Activated CD4-positive, alpha-beta memory T cell treated with anti-CD3 and anti-CD28 coated beads for 36 hours (primary cell): ENCODE measurements at regions of chr16 and their contacts with region 1.

Region 1: DNA sequence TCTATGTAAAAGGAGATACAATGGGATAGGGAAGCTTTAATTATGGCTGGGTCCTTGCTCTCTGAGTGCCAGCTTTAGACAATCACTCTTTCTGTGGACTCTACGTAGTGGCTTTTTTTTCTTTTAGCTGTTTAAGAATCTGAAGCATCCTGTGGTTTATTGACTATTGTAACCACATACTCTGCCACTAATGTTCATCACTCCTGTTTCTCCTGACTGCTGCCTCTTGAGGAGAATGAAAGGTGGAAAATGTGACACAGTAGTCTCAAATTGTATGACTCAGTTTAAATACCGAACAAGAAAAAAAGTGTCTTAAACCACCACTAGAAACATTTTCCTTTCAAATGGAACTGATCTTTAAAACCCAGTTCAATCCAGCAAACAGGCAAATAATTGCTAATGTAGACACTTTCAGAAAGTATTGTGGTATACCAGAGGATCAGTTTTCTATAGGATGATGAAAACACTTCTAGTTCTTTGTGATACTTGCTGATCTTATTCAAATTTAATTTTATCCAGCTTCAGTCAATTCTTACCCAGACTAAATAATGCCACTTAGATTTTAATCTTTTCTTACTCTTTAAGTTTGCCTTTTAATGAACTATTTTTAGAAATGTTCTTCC is 302.7 kb upstream of the PMFBP1 start:
- DNase-seq: no peak
- H3K4me3 Mint-ChIP-seq: no peak overlapping the region
- H3K27ac Mint-ChIP-seq: peak overlapping the region; percentile 11
- H3K4me1 Mint-ChIP-seq: peaks cover 15% of the 10 kb centered on the region
- H3K27me3 Mint-ChIP-seq: no peaks in the 10 kb centered on the region

Region 2: DNA sequence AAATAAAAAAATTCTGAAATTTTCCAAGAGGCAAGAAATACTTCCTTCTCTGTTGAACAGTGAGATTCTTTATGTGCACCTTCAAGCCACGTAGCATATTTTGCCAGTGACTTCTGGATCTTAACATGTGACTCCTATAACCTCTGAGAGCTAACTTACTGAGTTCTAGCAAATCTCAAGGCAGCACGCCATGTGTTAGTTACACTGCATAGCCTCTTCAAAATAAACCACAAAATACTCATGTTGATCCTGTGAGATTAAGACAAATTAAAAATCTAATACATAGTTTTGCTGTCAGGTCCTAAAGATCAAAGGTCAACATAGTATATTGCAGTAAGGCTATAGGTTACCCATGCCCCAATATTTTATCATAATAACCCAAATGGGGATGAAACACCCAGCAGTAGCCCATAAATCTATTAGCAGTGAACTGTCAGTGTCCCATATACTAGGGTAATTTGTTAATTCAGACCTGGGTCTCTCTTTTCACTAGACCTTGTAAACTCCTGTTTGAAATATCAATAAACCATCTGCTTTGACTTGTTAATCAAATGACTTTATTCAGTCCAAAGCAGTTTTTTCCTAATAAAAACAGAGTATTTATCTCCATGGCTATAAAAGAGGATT is 230.2 kb after region 1 on chr16:
- CTCF ChIA-PET with region 1: no interaction called
- POLR2A ChIA-PET with region 1: no interaction called
- intact Hi-C with region 1: no loop called
- DNase-seq: no peak
- H3K4me3 Mint-ChIP-seq: no peak overlapping the region
- H3K27ac Mint-ChIP-seq: no peak overlapping the region
- H3K4me1 Mint-ChIP-seq: no peaks in the 10 kb centered on the region
- H3K27me3 Mint-ChIP-seq: peaks cover 1% of the 10 kb centered on the region

Region 3: GRCh38 chr16:72787514-72788268 is 313.1 kb after region 1 on chr16:
- CTCF ChIA-PET with region 1: no interaction called
- POLR2A ChIA-PET with region 1: no interaction called
- intact Hi-C with region 1: loop called (anchors 10 kb)
- DNase-seq: peak; percentile 79
- H3K4me3 Mint-ChIP-seq: peak overlapping the region; percentile 60
- H3K27ac Mint-ChIP-seq: no peak overlapping the region
- H3K4me1 Mint-ChIP-seq: peaks cover 16% of the 10 kb centered on the region
- H3K27me3 Mint-ChIP-seq: peaks cover 30% of the 10 kb centered on the region